Activated CD8-positive, alpha-beta memory T cell treated with anti-CD3 and anti-CD28 coated beads, Interleukin-2, amount 10 ng/mL, durations not matched to agents 7 days and 5 days (primary cell): ENCODE measurements at regions of chr11 and their contacts with region 1.

Region 1: DNA sequence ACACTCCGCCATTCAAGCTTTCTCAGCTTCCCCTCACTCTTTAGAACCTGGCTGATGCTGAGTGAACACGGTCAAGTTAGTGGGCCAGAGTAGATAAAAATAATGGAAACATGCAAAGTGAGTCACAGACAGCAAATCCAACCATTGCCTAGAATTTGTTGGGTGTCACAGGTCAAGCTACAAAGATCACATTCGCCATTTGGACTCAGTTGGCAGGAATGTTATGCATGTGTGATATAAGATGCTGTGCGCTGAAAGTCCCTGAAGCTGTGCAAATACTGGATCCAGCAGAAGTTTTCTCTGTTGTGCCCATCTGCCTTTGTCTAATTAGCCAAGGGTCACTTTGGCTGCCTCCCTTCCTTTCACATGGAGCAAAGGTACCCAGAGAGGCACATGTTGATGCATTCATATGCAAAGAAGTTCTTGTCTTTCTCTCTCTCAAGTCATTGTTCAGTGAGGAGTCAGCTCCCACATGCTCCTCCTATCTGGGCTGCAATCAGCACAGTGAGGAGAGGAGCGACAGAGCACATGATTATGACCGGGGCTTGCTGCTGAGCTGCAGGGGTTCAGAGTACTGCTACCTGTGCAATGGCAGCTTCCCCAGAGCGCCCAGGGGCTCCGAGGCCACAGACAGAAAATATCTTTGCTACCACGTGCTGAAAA is 39.7 kb downstream of the FLI1 start:
- DNase-seq: peak; percentile 75
- ATAC-seq: peak; percentile 49
- H3K4me3 Mint-ChIP-seq: peak overlapping the region; percentile 59
- H3K27ac Mint-ChIP-seq: peak overlapping the region; percentile 92
- H3K4me1 Mint-ChIP-seq: peaks cover 96% of the 10 kb centered on the region
- H3K27me3 Mint-ChIP-seq: no peaks in the 10 kb centered on the region

Region 2: GRCh38 chr11:128720522-128720985 is 13.0 kb before region 1 on chr11:
- CTCF ChIA-PET with region 1: interaction called, 52 read pairs
- DNase-seq: peak; percentile 75
- ATAC-seq: peak; percentile 53
- H3K4me3 Mint-ChIP-seq: peak overlapping the region; percentile 70
- H3K27ac Mint-ChIP-seq: peak overlapping the region; percentile 98
- H3K4me1 Mint-ChIP-seq: peaks cover 95% of the 10 kb centered on the region
- H3K27me3 Mint-ChIP-seq: no peaks in the 10 kb centered on the region

Region 3: DNA sequence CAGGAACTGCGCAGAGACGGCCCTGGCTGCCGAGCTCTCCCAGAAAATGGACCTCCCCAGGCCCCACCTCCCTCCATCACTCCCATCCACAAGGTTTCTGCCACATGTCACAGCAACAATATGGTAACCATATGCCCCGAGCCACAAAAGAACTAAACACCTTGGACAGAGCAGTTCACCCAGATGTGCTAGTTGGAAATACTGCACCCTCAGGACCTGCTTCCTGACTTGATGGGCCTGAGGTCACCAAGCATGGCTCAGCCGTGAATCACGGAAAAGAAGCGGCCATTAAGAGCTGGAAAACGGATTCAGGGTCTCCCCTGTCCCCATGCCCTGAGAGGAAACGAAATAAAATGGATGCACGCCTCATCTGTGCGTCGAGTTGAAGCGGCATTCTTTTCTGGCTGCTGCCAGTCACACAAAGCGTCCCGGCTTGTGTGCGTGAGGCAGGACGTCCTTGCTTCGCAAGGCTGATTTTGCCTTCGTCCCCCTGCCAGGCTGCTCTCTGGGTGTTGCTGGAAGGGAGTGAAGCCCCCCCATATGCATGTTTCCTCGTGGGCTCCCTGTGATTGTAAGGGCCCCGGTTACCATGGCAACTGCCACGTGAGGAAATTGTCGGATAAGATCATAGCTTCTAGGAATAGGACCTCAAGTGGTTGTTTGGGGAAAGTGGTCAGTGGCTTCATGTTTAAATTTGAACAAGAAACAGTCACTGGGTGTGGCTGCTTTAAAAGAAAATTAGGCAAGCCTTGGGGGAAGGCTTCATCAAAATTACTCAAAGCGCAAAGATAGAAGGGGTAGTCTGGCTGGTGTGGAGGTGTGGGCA is 12.0 kb after region 1 on chr11:
- CTCF ChIA-PET with region 1: interaction called, 14 read pairs
- DNase-seq: peak; percentile 49
- ATAC-seq: peak; percentile 18
- H3K4me3 Mint-ChIP-seq: no peak overlapping the region
- H3K27ac Mint-ChIP-seq: peak overlapping the region; percentile 75
- H3K4me1 Mint-ChIP-seq: peaks cover 50% of the 10 kb centered on the region
- H3K27me3 Mint-ChIP-seq: no peaks in the 10 kb centered on the region